Activated T-helper 2 cell treated with anti-CD3 and anti-CD28 coated beads, Interferon-gamma antibody, Interleukin-2, Interleukin-4, amounts not matched to agents 10 μg/mL and 5 μg/mL and 100 μg/mL, durations not matched to agents 14 hours and 24 hours and 36 hours (primary cell): ENCODE measurements at regions of chr21 and their contacts with region 1.

Region 1: GRCh38 chr21:14572204-14572780 is 26.2 kb upstream of the SAMSN1 start:
- DNase-seq: no peak
- H3K4me3 Mint-ChIP-seq: no peak overlapping the region
- H3K27ac Mint-ChIP-seq: peak overlapping the region; percentile 90
- H3K4me1 Mint-ChIP-seq: peaks cover 53% of the 10 kb centered on the region
- H3K27me3 Mint-ChIP-seq: no peaks in the 10 kb centered on the region

Region 2: DNA sequence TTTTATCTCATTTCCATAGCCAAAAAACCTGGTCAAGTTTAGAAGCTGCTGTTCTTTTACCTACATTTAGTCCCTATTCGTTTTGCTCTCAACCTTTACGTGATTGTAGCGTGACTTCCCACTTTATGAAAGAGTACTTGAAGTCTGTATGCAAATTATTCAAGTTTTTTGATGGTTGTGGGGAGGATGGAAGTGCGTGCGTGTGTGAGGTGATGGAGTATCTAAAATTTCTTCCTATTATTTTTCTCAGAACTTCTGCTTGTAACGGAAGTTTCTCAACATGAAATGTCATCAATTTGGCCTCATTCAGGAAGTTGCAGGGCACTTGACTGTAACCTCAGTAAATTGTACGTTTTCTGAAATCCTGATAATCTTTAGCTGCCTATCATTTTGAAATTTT is 90.1 kb before region 1 on chr21:
- intact Hi-C with region 1: loop called (anchors 2 kb)
- DNase-seq: peak; percentile 24
- H3K4me3 Mint-ChIP-seq: peak overlapping the region; percentile 45
- H3K27ac Mint-ChIP-seq: peak overlapping the region; percentile 90
- H3K4me1 Mint-ChIP-seq: peaks cover 66% of the 10 kb centered on the region
- H3K27me3 Mint-ChIP-seq: no peaks in the 10 kb centered on the region

Region 3: GRCh38 chr21:14554948-14555347 is 17.3 kb before region 1 on chr21:
- intact Hi-C with region 1: loop called (anchors 2 kb)
- DNase-seq: peak; percentile 15
- H3K4me3 Mint-ChIP-seq: peak overlapping the region; percentile 49
- H3K27ac Mint-ChIP-seq: peak overlapping the region; percentile 72
- H3K4me1 Mint-ChIP-seq: peaks cover 68% of the 10 kb centered on the region
- H3K27me3 Mint-ChIP-seq: no peaks in the 10 kb centered on the region

Region 4: DNA sequence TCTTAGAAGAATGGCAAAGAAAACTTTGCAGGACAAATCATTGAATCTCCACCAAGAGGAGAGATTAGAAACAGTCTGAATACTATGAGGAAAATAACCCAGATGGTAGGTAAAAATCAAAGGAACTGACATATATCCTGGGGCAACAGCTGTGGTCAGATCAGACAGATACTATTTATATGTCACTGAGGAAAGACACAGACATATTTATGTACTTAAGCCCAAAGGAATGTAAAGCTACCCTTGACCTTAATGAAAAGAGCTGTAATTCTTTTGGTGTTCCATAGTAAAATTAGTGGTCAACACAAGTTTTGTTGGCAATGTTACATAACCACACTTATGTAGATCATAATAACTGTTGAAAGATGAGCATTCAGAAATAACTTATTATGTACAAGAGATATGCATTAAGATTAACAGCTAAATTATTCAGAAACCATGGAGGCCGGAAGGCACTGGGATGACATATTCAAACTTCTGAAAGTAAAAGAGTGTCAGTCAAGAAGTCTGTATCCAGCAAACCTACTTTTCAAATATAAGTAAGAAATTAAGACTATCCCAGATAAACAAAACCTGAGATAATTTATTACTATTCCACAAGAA is 139.9 kb after region 1 on chr21:
- intact Hi-C with region 1: no loop called
- DNase-seq: no peak
- H3K4me3 Mint-ChIP-seq: no peak overlapping the region
- H3K27ac Mint-ChIP-seq: no peak overlapping the region
- H3K4me1 Mint-ChIP-seq: peaks cover 6% of the 10 kb centered on the region
- H3K27me3 Mint-ChIP-seq: no peaks in the 10 kb centered on the region